Mammary epithelial cell (primary cell): ENCODE measurements at regions of chr1 and their contacts with region 1.

Region 1: DNA sequence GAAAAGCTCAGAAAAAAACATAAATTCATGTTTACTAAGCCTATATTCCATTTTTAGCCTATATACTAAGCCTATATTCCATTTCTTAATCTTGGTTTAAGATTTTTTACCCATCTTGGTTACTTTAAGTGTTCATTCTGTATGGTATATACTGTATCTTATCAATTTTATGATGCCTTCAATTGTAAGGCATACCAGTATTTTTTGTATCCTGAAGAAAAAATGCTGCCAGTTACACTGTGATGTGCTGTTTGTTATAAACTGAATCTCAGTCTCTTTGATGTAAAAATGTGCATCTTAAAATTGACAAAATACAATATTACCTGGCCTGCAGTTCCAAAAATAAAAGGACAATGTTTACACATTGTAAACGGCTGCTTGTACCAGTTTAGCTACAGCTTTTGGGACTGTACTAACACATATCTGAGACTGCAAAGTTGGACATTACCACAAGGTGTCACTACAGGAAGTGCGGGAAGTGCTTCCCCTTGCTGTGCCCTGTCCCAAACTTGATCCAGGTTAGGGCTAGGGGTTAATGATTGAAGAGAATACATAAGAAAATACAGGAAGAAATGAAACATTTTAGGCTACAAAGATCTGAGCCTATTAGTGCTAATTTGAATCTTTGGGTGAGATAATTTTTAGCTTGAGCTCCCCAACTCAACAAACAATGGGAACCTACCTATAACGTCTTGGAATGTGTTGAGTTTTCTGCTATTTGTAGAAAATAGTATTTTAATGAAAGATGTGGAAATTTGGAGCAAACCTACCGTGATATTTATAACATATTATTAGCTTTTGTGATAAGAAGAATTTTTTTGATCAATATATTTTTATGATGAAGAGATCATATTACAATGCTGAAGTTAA is 108.9 kb downstream of the LBR start:
- DNase-seq: peak; percentile 36
- H3K4me3 ChIP-seq: no peak overlapping the region
- H3K27ac ChIP-seq: no peak overlapping the region
- H3K4me1 ChIP-seq: no peaks in the 10 kb centered on the region
- H3K27me3 ChIP-seq: no peaks in the 10 kb centered on the region
- CTCF ChIP-seq: peak; percentile 87 to 90

Region 2: DNA sequence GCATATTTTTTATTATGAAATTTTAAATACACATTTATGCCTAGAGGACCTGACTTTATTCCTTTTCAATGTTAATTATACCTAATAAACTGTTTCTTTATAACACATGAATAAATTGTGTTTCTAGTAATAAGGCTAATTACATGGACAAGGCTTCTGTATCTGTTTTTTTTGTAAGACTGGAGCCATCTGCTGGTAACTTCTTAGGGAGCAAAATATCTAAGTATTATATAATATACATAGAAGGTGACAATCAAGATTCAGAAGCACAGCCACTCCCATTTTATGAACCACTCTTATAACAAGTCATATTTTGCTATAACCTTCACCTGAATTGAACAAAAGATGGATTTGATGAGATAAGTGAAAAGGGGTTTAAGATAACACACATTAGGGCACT is 24.7 kb after region 1 on chr1:
- CTCF ChIA-PET with region 1: no interaction called
- dilution Hi-C with region 1: no loop called
- in situ Hi-C with region 1: no loop called
- intact Hi-C with region 1: loop called (anchors 1 kb)
- DNase-seq: no peak
- H3K4me3 ChIP-seq: no peak overlapping the region
- H3K27ac ChIP-seq: no peak overlapping the region
- H3K4me1 ChIP-seq: peaks cover 8% of the 10 kb centered on the region
- H3K27me3 ChIP-seq: no peaks in the 10 kb centered on the region
- CTCF ChIP-seq: peak; percentile 12 to 43

Region 3: GRCh38 chr1:225361176-225361575 is 42.2 kb after region 1 on chr1:
- CTCF ChIA-PET with region 1: no interaction called
- dilution Hi-C with region 1: no loop called
- in situ Hi-C with region 1: no loop called
- intact Hi-C with region 1: no loop called
- DNase-seq: peak; percentile 27
- H3K4me3 ChIP-seq: no peak overlapping the region
- H3K27ac ChIP-seq: no peak overlapping the region
- H3K4me1 ChIP-seq: no peaks in the 10 kb centered on the region
- H3K27me3 ChIP-seq: no peaks in the 10 kb centered on the region
- CTCF ChIP-seq: no peak

Region 4: DNA sequence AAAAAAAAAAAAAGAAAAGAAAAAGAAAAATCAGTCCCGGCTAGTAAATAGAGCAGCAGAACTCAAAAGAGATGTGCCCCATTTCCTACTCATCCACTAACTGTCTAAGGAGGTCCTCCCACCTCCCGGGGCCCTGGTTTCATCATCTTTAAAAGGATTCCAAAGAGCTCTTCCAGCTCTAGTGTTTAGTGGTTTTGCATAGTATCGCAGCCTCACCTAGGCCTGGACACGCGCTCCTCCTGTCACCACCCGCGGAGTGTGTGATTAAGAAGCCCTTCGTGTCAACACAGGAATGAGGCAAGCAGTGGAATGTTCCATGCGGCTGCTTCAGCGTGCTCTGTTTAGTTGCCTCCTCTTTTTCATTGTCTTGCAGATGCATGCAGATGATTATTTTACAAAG is 59.9 kb after region 1 on chr1:
- CTCF ChIA-PET with region 1: no interaction called
- dilution Hi-C with region 1: no loop called
- in situ Hi-C with region 1: no loop called
- intact Hi-C with region 1: loop called (anchors 1 kb)
- DNase-seq: peak; percentile 94
- H3K4me3 ChIP-seq: no peak overlapping the region
- H3K27ac ChIP-seq: no peak overlapping the region
- H3K4me1 ChIP-seq: peaks cover 13% of the 10 kb centered on the region
- H3K27me3 ChIP-seq: no peaks in the 10 kb centered on the region
- CTCF ChIP-seq: no peak

Region 5: DNA sequence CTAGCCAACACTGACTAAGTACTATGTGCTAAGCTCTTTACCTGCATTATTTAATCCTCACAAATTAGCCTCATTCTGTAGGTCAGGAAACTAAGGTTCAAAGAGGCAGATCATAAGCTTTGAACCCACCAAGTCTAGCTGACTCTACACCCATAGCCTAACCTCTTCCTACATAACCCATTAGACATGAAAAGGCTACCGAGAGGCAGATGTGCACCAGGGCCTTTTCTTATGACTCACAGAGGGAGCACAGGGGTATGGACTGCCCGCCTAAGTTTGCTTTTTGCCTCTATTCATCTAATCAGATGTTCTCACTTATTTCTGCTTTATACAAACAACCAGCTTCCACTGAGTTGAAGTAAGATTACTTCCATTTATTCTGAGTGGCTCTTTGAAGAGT is 77.4 kb after region 1 on chr1:
- CTCF ChIA-PET with region 1: no interaction called
- dilution Hi-C with region 1: no loop called
- in situ Hi-C with region 1: no loop called
- intact Hi-C with region 1: no loop called
- DNase-seq: no peak
- H3K4me3 ChIP-seq: no peak overlapping the region
- H3K27ac ChIP-seq: no peak overlapping the region
- H3K4me1 ChIP-seq: peaks cover 2% of the 10 kb centered on the region
- H3K27me3 ChIP-seq: no peaks in the 10 kb centered on the region
- CTCF ChIP-seq: no peak

Region 6: DNA sequence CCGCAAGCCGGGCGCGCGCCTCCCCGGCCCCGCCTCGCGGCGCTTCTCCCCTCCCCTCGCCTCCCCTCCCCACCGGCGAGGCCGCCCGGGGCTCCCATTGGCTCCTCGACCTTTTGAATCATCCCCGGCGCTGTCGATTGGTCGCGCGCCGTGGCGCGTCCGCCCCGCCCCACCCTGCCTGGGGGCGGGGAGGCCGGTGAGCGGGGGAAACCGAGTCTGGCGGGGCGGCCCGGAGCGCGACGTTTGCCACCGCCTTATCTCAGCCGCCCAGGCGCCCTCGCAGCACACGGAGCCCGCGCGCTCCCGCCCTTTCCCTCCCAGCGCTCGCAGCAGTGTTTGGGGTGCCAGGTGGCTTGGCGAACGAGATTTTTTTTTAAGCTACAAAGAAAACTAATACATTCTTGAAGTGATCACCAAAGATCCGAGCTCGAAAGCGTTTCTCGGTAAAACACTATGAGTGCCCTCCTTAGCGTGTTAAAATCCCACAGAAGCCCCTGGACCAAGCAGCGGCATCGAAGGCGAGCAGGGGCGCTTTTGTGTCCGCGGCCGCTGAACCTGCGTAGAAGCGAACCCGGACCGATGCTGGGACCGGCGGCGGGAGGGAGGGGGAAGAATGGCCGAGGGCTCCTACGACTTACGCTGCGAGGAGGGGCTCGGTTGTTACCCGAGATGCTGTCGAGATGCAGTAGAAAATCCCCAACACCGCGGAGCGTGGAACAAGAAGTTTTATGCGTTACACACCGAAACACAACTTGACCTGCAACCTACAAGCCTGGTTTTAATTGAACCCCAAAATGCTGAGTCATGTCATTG is 109.3 kb after region 1 on chr1:
- CTCF ChIA-PET with region 1: no interaction called
- dilution Hi-C with region 1: no loop called
- in situ Hi-C with region 1: no loop called
- intact Hi-C with region 1: loop called (anchors 5 kb)
- DNase-seq: peak; percentile 89
- H3K4me3 ChIP-seq: peak overlapping the region; percentile 79 to 91 (median 87)
- H3K27ac ChIP-seq: peak overlapping the region; percentile 84
- H3K4me1 ChIP-seq: peaks cover 39% of the 10 kb centered on the region
- H3K27me3 ChIP-seq: no peaks in the 10 kb centered on the region
- CTCF ChIP-seq: no peak